ENCODE measurements at regions of chr4 and their contacts with region 1.

Region 1: DNA sequence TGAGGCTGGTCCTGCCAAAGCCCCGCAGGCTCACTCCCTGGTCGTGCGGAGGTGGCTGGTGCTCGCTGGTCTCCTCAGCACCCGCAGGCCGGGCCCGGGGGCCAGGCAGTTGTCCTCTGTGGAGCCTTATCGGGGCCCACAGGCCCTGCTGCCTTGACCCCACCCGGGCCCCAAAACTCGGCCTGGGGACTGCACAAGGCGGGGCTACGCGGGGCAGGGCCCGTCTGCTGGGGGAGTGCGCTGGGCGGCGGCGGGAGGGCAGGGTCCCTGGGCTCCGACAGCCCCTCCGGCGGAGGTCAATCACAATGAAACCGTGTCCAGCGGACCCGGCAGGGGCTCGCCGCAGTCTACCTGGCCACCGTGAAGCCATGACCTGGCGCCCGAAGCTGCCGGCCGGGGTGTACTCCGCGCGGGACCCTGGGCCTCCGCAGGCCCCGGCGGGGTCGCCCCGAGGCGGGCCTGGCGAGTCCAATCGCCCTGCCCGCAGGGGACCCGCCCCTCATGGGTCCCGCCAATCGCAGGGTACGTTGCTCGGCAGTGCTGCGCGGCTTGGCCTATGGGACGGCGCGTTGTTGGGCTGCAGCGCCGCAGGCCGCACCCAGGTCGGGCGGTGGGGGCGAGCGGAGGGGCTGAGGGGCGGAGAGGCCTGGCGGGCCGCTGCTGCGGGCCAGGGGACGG is at the start of gene ADD1:
- DNase-seq: peak; percentile 87 to 93
- ATAC-seq: peak; percentile 90 to 91
- H3K4me3 ChIP-seq: peak within 1 kb of the TSS; percentile 85 to 99 (median 89)
- H3K27ac ChIP-seq: peak within 1 kb of the TSS; percentile 92 to 97 (median 96)
- H3K4me1 ChIP-seq: peaks cover 41 to 43% of the 10 kb centered on the region in 2 donors
- H3K27me3 ChIP-seq: no peaks in the 10 kb centered on the region
- CTCF ChIP-seq: no peak
- POLR2A ChIP-seq: peak; percentile 89 to 92
- total RNA-seq, gene ADD1: 144 to 255 (median 178) TPM

Region 2: DNA sequence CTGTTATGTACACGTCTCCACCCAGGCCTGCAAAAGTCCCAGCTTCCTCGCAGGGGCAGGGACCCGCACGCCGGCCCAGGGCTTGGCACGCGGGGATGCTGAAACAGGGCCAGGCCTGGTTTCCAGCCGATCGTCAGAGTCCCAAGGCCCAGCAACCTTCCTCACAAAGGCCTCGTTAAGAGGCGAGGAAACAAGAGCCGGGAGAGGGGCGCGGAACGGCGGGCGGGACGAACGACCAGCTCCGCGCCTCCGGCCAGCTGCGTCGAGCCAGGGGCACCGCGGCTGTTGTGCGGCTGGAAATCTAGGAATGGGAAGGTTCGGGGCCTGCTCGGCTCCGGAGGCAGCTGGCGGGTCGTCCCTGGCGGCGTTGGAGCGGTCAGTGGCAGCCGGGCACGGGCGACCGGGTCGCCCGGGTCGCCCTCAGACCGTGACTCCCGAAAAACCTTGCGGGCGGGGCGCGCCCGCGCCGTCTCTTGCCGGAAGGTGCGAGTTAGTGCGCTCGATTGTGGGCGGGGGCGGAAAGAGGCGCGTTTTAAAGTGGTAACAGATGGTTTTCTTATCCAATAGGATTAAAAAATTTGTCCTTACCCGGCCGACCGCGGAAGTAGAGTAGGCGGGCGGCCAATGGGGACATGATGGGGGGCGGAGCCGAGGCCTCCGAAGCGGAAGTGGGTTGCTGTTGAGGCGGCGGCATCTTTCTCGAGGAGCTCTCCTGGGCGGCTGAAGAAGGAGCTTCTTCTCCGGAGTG is 374.8 kb before region 1 on chr4 and contains the start of gene RNF4:
- in situ Hi-C with region 1: no loop called
- intact Hi-C with region 1: no loop called
- DNase-seq: peak; percentile 94 to 97
- ATAC-seq: peak; percentile 98
- H3K4me3 ChIP-seq: peak within 1 kb of the TSS; percentile 81 to 89 (median 88)
- H3K27ac ChIP-seq: peak within 1 kb of the TSS; percentile 88 to 98 (median 94)
- H3K4me1 ChIP-seq: peaks cover 26 to 27% of the 10 kb centered on the region in 2 donors
- H3K27me3 ChIP-seq: no peaks in the 10 kb centered on the region
- CTCF ChIP-seq: no peak
- POLR2A ChIP-seq: peak; percentile 75 to 81
- total RNA-seq, gene RNF4: 21.7 to 48.7 (median 34.7) TPM

Region 3: GRCh38 chr4:2811830-2812611 is 31.4 kb before region 1 on chr4:
- in situ Hi-C with region 1: no loop called
- intact Hi-C with region 1: loop called (anchors 2 kb)
- DNase-seq: peak; percentile 70 to 81
- ATAC-seq: peak; percentile 82 to 87
- H3K4me3 ChIP-seq: peak overlapping the region; percentile 53 to 58 (median 56)
- H3K27ac ChIP-seq: peak overlapping the region; percentile 89 to 93 (median 92)
- H3K4me1 ChIP-seq: peaks cover 48 to 50% of the 10 kb centered on the region in 2 donors
- H3K27me3 ChIP-seq: no peaks in the 10 kb centered on the region
- CTCF ChIP-seq: no peak
- POLR2A ChIP-seq: peak; percentile 24 to 25

Region 4: DNA sequence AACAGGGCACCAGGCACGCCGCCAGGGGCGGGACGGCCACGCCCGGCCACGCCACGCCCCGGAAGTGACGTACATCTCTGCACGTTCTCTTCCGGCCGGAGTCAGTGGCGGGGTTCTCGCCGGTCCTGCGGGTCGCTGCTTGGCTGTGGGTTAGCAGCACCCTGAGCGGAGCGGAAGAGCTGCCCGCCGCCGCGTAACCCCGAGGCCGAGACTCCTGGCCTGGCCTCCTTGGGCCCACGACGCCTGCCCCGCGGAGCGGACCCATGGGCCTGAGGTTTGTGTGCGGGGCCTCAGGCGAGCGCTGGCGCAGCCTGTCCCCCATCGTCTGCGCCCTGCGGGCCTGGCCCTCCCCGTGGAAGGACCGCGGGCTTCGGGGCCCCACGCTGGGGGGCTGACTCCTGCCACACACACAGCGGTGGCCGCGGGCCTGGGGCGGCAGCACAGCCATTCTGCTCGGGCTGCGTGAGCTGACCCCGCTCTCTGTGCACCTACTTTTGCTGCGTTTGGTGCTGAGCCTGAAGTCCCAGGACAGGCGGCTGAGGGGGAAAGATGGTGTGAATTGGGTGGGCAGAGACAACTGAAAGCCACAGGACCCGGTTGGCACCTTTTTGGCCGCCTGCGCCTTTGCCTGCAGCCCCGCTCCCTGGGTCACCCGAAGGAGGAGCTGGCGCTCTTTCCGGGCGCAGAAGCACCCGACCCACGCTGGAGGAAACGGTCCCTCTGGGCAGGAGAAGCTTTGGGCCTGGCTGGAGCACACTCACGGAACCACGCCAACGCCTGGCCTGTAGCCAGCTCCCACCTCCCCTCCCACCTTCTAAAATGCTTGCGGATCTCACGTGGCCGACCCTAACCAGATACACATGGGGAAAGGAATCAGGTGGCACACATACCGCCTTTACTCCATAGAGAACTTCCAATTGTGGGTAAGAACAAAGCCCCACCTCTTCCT is 91.7 kb after region 1 on chr4:
- in situ Hi-C with region 1: no loop called
- intact Hi-C with region 1: loop called (anchors 2 kb)
- DNase-seq: peak; percentile 89 to 92
- ATAC-seq: peak; percentile 77 to 83
- H3K4me3 ChIP-seq: peak overlapping the region; percentile 75 to 98 (median 94)
- H3K27ac ChIP-seq: peak overlapping the region; percentile 86 to 98 (median 94)
- H3K4me1 ChIP-seq: peaks cover 29 to 30% of the 10 kb centered on the region in 2 donors
- H3K27me3 ChIP-seq: no peaks in the 10 kb centered on the region
- CTCF ChIP-seq: no peak
- POLR2A ChIP-seq: peak; percentile 90 to 95

Region 5: DNA sequence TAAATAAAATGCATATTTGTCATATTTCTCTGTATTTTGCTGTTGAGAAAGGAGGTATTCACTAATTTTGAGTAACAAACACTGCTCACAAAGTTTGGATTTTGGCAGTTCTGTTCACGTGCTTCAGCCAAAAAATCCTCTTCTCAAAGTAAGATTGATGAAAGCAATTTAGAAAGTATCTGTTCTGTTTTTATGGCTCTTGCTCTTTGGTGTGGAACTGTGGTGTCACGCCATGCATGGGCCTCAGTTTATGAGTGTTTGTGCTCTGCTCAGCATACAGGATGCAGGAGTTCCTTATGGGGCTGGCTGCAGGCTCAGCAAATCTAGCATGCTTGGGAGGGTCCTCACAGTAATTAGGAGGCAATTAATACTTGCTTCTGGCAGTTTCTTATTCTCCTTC is 234.4 kb after region 1 on chr4:
- in situ Hi-C with region 1: no loop called
- intact Hi-C with region 1: no loop called
- DNase-seq: no peak
- ATAC-seq: no peak
- H3K4me3 ChIP-seq: no peak overlapping the region
- H3K27ac ChIP-seq: no peak overlapping the region
- H3K4me1 ChIP-seq: peaks cover 19 to 36% of the 10 kb centered on the region in 2 donors
- H3K27me3 ChIP-seq: no peaks in the 10 kb centered on the region
- CTCF ChIP-seq: no peak
- POLR2A ChIP-seq: no peak